Vagina (tissue), 2 donors: ENCODE measurements at regions of chr2 and their contacts with region 1.

Region 1: GRCh38 chr2:24231461-24231881 is 56.6 kb downstream of the FAM228A start:
- DNase-seq: no peak
- H3K4me3 ChIP-seq: no peak overlapping the region
- H3K27ac ChIP-seq: no peak overlapping the region
- H3K4me1 ChIP-seq: no peaks in the 10 kb centered on the region
- H3K27me3 ChIP-seq: no peaks in the 10 kb centered on the region
- CTCF ChIP-seq: no peak
- POLR2A ChIP-seq: no peak

Region 2: DNA sequence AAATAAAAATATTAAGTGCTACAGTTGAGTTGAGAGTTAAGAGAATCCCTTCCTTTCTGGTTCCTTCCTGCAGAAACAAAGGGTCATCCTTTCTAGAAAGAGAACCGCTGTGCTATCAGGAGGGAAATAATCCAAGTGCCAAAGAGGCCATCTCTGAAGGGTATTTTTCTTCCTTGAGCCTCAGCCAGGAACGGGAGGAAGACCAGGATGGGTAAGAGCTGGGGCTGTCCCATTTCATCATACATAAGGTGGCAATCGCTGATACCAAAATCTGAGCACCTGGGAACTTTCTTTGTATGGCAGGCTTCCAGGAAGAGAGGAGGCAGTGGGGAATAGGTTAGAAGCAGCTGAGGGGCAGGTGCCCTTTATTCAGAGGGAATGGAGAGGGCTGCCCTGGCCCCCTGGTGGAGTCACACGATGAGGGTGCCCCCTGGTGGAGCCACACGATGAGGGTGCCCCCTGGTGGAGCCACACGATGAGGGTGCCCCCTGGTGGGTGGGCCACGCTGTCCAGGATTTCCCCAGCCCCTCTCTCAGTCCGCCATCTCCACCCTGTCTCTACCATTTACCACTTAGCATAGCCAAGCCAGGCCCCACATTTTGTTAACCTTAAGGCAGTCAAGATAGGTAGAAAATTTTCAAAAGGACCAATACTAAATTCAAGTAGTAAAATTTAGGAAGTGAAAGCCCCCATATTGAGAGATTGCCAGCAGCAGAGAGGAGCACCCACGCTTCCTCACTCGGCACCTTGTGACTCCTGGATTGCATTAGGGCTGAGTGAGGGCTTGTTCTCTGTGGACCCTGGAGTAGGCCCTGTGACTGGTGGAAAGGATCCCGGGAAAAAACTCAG is 67.1 kb before region 1 on chr2:
- intact Hi-C with region 1: no loop called
- DNase-seq: no peak
- H3K4me3 ChIP-seq: no peak overlapping the region
- H3K27ac ChIP-seq: no peak overlapping the region
- H3K4me1 ChIP-seq: no peaks in the 10 kb centered on the region
- H3K27me3 ChIP-seq: no peaks in the 10 kb centered on the region
- CTCF ChIP-seq: peak in 2 of 3 experiments; percentile 18 to 60
- POLR2A ChIP-seq: no peak

Region 3: GRCh38 chr2:24276349-24276899 is 45.0 kb after region 1 on chr2:
- intact Hi-C with region 1: no loop called
- DNase-seq: no peak
- H3K4me3 ChIP-seq: no peak overlapping the region
- H3K27ac ChIP-seq: no peak overlapping the region
- H3K4me1 ChIP-seq: peaks cover 9% of the 10 kb centered on the region
- H3K27me3 ChIP-seq: no peaks in the 10 kb centered on the region
- CTCF ChIP-seq: no peak
- POLR2A ChIP-seq: no peak

Region 4: DNA sequence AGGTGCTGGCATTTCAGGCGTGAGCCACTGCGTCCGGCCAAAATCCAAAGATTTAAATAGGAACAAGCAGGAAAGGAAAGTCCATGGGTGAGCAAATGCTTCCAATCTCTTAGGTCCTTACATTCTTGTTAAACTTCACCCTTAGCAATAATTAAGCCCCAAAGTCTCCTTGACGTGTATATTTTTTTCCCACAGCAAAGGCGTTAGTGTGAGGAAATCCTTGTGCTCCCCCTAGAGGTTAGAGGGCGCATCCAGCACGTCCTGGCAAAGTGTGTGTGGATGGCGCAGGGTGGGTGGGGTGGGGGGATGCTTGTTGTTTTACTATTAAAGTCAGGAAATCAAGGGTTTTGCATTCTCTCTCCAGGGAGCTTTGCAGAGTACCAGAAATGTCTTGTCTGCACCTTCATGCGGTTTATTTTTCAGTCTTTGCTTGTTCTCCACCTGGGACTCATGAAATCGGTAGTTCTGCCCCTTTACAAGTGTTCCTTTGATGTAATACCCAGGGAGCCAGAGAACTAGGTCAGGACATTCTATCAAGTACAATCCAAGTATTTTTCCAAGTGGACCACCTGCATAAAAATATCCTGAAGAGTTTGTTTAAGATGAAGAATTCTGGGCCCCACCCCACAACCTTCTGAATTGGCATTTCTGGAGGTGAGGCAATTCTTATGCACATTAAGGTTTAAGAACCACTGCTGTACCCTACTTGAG is 151.0 kb after region 1 on chr2:
- intact Hi-C with region 1: loop called (anchors 10 kb)
- DNase-seq: no peak
- H3K4me3 ChIP-seq: no peak overlapping the region
- H3K27ac ChIP-seq: no peak overlapping the region
- H3K4me1 ChIP-seq: no peaks in the 10 kb centered on the region
- H3K27me3 ChIP-seq: no peaks in the 10 kb centered on the region
- CTCF ChIP-seq: peak in 2 of 3 experiments; percentile 31 to 85
- POLR2A ChIP-seq: no peak